ENCODE measurements at regions of chrX and their contacts with region 1.

Region 1: GRCh38 chrX:15468036-15468435 is 25.1 kb downstream of the PIR start:
- DNase-seq: no peak
- ATAC-seq: peak; percentile 73

Region 2: GRCh38 chrX:15349046-15349445 is 119.0 kb before region 1 on chrX:
- intact Hi-C with region 1: loop called (anchors 10 kb)
- DNase-seq: no peak
- ATAC-seq: peak; percentile 87

Measured in sciatic nerve (tissue), 2 donors.